ENCODE measurements at regions of chr10 and their contacts with region 1.

Region 1: GRCh38 chr10:119522747-119523431 is 19.6 kb downstream of the RGS10 start:
- DNase-seq: peak; percentile 85 to 96
- H3K4me3 ChIP-seq: no peak overlapping the region
- H3K27ac ChIP-seq: peak overlapping the region; percentile 77
- H3K4me1 ChIP-seq: peaks cover 28% of the 10 kb centered on the region
- H3K27me3 ChIP-seq: no peaks in the 10 kb centered on the region
- CTCF ChIP-seq: no peak

Region 2: GRCh38 chr10:119401671-119402395 is 121.1 kb before region 1 on chr10:
- CTCF ChIA-PET with region 1: no interaction called
- POLR2A ChIA-PET with region 1: interaction called, 24 read pairs
- intact Hi-C with region 1: no loop called
- DNase-seq: peak; percentile 25 to 72
- H3K4me3 ChIP-seq: no peak overlapping the region
- H3K27ac ChIP-seq: peak overlapping the region; percentile 17; the same call in 1 of the 2 replicates
- H3K4me1 ChIP-seq: no peaks in the 10 kb centered on the region
- H3K27me3 ChIP-seq: no peaks in the 10 kb centered on the region
- CTCF ChIP-seq: no peak

Region 3: GRCh38 chr10:119608316-119609155 is 85.6 kb after region 1 on chr10:
- CTCF ChIA-PET with region 1: no interaction called
- POLR2A ChIA-PET with region 1: no interaction called
- intact Hi-C with region 1: no loop called
- DNase-seq: peak; percentile 41 to 52
- H3K4me3 ChIP-seq: no peak overlapping the region
- H3K27ac ChIP-seq: no peak overlapping the region
- H3K4me1 ChIP-seq: no peaks in the 10 kb centered on the region
- H3K27me3 ChIP-seq: no peaks in the 10 kb centered on the region
- CTCF ChIP-seq: peak; percentile 71

Measured in PC-9 (cell line).